Activated T-helper 2 cell treated with anti-CD3 and anti-CD28 coated beads, Interferon-gamma antibody, Interleukin-2, Interleukin-4, amounts not matched to agents 10 μg/mL and 5 μg/mL and 100 μg/mL, durations not matched to agents 14 hours and 24 hours and 36 hours (primary cell): ENCODE measurements at regions of chr1 and their contacts with region 1.

Region 1: DNA sequence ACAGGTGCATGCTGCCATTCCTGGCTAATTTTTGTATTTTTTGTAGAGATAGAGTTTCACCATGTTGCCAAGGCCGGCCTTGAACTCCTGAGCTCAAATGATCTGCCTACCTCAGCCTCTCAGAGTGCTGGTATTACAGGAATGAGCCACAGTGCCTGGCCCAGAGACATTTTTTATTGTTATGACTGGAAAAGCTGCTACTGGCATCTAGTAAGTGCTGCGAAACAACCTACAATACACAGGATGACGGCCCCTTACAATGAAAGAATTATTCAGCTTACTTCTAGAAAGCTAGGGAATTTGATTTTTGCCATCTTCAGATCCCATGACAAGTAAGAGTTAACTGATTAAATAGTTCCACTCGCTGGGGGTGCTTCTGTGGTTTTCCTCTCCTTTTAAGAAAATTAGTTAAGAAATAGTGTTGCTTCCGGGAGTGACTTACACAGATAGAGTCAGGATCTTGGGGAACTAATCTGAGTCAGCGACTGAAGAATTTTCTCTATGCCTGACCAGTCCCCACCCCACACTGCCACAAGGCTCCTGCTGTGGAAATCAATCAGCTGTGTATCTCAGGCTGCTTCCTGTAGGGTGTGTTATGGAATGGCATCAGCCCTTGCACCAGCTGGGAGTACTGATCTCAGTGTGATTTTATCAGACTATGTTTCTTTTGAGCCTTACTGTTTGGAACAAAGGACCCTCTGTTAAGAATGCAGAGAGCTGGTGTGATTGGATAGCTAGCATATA is 93.0 kb upstream of the BMP8A start:
- DNase-seq: no peak
- H3K4me3 Mint-ChIP-seq: no peak overlapping the region
- H3K27ac Mint-ChIP-seq: peak overlapping the region; percentile 79
- H3K4me1 Mint-ChIP-seq: peaks cover 33% of the 10 kb centered on the region
- H3K27me3 Mint-ChIP-seq: no peaks in the 10 kb centered on the region

Region 2: DNA sequence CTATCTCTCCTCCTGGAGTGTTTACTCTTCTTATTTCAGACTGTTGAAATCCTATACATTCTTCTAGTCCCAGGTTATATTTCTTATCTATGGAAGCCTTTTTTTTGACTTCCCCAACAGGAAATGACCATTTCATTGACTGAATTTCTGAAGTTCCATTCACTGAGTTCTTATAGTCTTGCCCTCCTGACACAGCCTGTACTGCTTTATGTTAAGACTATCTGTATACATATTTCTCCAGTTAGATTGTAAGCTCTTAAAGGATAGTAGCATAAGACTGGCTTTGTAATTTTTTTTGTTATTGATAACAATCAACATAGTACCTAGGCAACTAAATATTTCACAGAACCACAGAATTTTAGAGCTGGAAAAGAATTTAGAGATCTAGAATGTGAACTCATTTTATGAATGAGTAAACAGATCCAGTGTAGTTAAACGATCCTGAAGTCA is 208.8 kb before region 1 on chr1:
- intact Hi-C with region 1: loop called (anchors 5 kb)
- DNase-seq: no peak
- H3K4me3 Mint-ChIP-seq: no peak overlapping the region
- H3K27ac Mint-ChIP-seq: peak overlapping the region; percentile 91
- H3K4me1 Mint-ChIP-seq: peaks cover 74% of the 10 kb centered on the region
- H3K27me3 Mint-ChIP-seq: no peaks in the 10 kb centered on the region

Region 3: DNA sequence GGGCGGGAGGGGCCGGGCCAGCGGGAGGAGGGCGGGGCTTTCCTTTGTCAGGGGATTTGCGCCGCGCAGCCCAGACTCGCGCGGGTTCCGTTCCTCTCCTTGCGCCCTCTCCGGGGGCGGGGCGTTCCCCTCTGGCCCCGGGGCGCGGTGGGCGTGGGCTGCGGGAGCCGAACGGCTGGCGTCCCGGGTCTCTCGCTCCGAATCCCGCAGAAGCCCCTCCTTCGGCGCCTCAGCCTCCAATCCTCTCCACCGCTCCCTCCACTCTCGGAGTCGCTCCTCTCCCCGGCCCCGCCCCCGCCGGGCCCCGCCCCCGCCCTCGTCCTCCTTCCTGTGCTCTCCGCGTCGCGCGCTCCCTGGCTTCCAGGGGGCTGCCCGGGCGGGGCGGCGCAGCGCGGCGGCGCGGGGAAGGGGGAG is 10.2 kb after region 1 on chr1:
- intact Hi-C with region 1: loop called (anchors 1 kb)
- DNase-seq: peak; percentile 81
- H3K4me3 Mint-ChIP-seq: peak overlapping the region; percentile 88
- H3K27ac Mint-ChIP-seq: no peak overlapping the region
- H3K4me1 Mint-ChIP-seq: peaks cover 43% of the 10 kb centered on the region
- H3K27me3 Mint-ChIP-seq: no peaks in the 10 kb centered on the region

Region 4: GRCh38 chr1:39596163-39596562 is 197.7 kb after region 1 on chr1:
- intact Hi-C with region 1: no loop called
- DNase-seq: no peak
- H3K4me3 Mint-ChIP-seq: no peak overlapping the region
- H3K27ac Mint-ChIP-seq: no peak overlapping the region
- H3K4me1 Mint-ChIP-seq: peaks cover 6% of the 10 kb centered on the region
- H3K27me3 Mint-ChIP-seq: peaks cover 5% of the 10 kb centered on the region